ENCODE measurements at regions of chr17 and their contacts with region 1.

Region 1: GRCh38 chr17:40531051-40531991 is 29.9 kb upstream of the TNS4 start:
- DNase-seq: no peak

Region 2: GRCh38 chr17:40362696-40363110 is 168.6 kb before region 1 on chr17:
- CTCF ChIA-PET with region 1: interaction called, 36 read pairs
- POLR2A ChIA-PET with region 1: interaction called, 11 read pairs
- DNase-seq: peak; percentile 79

Region 3: GRCh38 chr17:40475234-40475908 is 56.0 kb before region 1 on chr17:
- CTCF ChIA-PET with region 1: interaction called, 12 read pairs
- POLR2A ChIA-PET with region 1: no interaction called
- DNase-seq: no peak

Region 4: DNA sequence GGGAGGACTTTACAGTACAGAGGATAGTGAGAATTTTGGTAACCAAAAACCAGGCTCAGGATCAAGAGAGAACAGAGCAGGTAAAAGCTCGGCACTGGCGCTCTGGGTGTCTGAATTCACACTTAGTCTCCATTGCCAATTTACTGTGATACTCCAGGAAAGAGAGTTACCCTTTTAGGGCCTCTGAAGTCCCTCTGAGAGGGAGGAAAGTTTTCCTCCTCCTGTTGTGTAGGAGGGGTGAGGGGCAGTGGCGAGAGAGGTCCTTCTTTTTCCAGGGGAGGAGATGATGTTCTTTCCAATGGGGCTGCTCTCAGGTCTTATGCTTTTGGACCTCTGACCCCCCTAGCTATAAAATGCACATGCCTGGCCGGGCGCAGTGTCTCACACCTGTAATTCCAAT is 24.5 kb before region 1 on chr17:
- CTCF ChIA-PET with region 1: no interaction called
- POLR2A ChIA-PET with region 1: no interaction called
- DNase-seq: no peak

Region 5: DNA sequence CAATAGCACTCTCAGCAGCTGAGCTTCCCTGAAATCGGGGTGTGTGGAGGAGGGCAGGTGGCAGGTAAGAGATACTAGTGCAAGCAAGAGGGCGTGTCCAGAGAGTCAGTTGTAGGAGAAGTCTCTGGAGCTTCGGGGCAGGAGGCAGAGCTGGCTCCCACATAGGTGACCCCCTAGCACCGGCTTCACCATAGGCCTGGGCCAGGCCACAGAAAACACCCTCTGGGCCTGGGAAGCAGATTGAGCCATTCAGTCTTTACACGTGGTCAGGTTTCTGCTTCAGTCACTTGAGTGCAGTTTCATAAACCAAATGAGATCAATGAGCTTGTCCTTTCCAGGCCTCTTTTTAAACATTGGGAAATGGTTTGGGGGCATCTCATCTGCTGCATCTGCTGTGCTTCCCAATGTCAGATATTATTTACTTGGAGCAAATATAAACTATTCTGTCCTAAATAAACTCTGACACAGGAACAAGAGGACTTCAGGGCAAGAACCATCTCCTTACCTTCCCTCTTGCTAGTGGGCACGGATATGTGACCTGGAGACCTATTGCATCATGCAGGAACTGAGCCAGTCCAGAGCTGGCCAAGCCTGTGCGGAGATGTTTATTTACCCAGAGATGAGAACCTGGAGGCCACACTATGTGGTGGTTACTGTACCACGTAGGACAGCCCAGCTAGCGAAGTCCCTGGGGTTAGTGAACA is 17.8 kb after region 1 on chr17:
- CTCF ChIA-PET with region 1: interaction called, 13 read pairs
- POLR2A ChIA-PET with region 1: no interaction called
- DNase-seq: no peak

Measured in HEK293T (cell line).